ENCODE measurements at regions of chr9 and their contacts with region 1.

Region 1: DNA sequence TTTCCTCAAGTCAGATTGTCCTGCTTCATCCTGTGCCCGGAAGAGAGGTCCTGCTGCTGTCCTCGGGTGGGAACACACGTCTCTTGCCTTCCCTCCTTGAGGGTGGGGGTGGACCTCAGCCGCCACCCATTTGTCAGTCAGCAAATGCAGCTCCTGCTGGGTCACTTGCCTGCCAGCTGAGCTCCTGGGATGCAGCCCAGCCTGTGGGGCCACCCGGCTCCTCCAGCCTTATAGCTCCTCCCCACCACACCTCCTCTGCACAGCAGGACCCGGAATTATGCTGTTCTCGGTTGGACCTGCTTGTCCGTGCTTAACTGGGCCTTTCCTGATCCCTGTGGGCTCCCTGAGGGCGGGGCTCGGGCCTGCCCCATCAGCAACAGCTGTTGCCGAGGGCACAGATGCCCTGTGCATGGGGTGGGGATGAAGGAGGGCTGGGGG is 52.7 kb downstream of the RXRA start:
- DNase-seq: peak; percentile 74 to 91 (median 89)
- ATAC-seq: peak; percentile 41 to 47
- H3K4me3 ChIP-seq: no peak overlapping the region
- H3K27ac ChIP-seq: peak overlapping the region; percentile 5
- H3K4me1 ChIP-seq: peaks cover 70% of the 10 kb centered on the region
- H3K27me3 ChIP-seq: no peaks in the 10 kb centered on the region

Region 2: DNA sequence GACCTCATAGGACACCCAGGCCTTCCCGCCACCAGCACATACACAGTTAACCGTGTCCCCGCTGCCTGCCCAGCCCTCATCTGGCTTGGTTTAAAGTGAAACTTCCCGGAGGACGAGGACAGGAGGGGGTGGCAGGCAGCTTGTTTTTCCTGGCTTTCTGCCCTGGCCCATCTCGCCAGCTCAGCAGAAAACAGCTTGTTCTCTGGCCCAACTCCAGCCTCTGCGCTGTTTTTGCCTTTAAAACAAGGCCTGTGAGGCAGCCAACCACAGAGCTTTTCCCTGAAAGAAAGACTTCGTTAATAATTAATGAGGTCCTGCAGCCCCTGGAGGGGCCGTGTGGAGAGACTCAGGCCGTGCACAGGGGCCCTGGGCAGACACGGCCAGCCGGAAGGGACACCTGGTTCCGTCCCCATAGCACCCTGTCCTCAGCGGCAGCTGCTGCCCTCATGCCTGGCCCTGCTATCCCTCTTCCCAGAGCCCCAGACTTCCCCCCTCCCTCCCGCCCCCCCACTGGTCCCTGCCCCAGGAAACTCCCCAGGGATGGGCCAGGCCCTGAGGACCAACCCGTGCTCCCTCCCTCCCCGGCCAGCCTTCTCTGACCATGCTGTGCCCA is 56.1 kb after region 1 on chr9:
- intact Hi-C with region 1: loop called in 1 of 4 experiments (anchors 5 kb)
- DNase-seq: peak; percentile 98 to 99 (median 98)
- ATAC-seq: peak; percentile 83 to 85
- H3K4me3 ChIP-seq: no peak overlapping the region
- H3K27ac ChIP-seq: peak overlapping the region; percentile 91
- H3K4me1 ChIP-seq: peaks cover 15% of the 10 kb centered on the region
- H3K27me3 ChIP-seq: no peaks in the 10 kb centered on the region

Region 3: DNA sequence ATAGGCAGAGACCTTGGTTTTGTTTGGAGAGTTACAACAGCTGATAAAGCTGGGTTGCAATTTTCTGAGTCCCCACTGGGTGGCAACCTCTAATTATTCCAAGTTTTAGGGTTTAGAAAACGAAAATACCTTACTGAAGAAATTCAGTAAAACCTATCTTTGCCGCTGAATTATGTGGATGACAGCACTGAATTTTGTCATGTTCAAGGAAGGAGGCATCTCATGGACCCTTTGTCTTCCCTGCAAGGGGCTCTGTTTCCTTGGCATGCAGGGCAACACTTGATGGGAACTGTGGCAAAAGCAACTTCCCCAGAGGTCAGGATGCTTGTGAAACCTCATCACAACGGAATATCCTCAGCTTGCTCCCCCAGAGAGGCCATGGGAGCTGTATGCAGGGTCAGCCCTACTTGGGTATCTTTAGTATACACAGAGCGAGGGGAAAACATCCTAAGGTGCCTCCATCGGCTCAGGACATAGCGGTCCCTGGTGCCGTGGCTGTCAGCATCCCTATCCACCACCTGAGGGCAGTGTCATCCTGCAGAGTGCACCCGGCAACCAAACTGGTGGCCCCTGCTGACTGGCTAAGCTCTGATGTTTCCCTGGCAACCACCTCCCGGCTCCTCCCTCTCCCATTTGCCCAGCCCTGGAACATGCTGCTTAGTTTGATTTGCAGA is 70.4 kb after region 1 on chr9:
- intact Hi-C with region 1: no loop called
- DNase-seq: peak; percentile 93 to 97 (median 95)
- ATAC-seq: peak; percentile 95
- H3K4me3 ChIP-seq: no peak overlapping the region
- H3K27ac ChIP-seq: no peak overlapping the region
- H3K4me1 ChIP-seq: no peaks in the 10 kb centered on the region
- H3K27me3 ChIP-seq: no peaks in the 10 kb centered on the region